ENCODE measurements at regions of chr11 and their contacts with region 1.

Region 1: GRCh38 chr11:43895601-43896000 is 15.0 kb downstream of the ALKBH3 start:
- DNase-seq: no peak
- H3K4me3 ChIP-seq: no peak overlapping the region
- H3K27ac ChIP-seq: no peak overlapping the region
- H3K4me1 ChIP-seq: peaks cover 0 to 18% of the 10 kb centered on the region in 2 experiments; a peak in 2 of 4 replicates
- H3K27me3 ChIP-seq: no peaks in the 10 kb centered on the region
- CTCF ChIP-seq: no peak
- EP300 ChIP-seq: no peak
- RAD21 ChIP-seq: no peak

Region 2: GRCh38 chr11:43810929-43811596 is 84.5 kb before region 1 on chr11:
- CTCF ChIA-PET with region 1: no interaction called
- POLR2A ChIA-PET with region 1: no interaction called
- DNase-seq: no peak
- H3K4me3 ChIP-seq: no peak overlapping the region
- H3K27ac ChIP-seq: no peak overlapping the region
- H3K4me1 ChIP-seq: peaks cover 3 to 8% of the 10 kb centered on the region in 2 experiments; a peak in 3 of 4 replicates
- H3K27me3 ChIP-seq: no peaks in the 10 kb centered on the region
- CTCF ChIP-seq: peak; percentile 65
- EP300 ChIP-seq: no peak
- RAD21 ChIP-seq: peak; percentile 80

Region 3: GRCh38 chr11:43920598-43921419 is 25.2 kb after region 1 on chr11:
- CTCF ChIA-PET with region 1: interaction called, 24 read pairs
- POLR2A ChIA-PET with region 1: interaction called, 6 read pairs
- DNase-seq: no peak
- H3K4me3 ChIP-seq: no peak overlapping the region
- H3K27ac ChIP-seq: peak overlapping the region; percentile 65 to 100
- H3K4me1 ChIP-seq: peaks cover 4 to 84% of the 10 kb centered on the region in 2 experiments; a peak in 3 of 4 replicates
- H3K27me3 ChIP-seq: no peaks in the 10 kb centered on the region
- CTCF ChIP-seq: no peak
- EP300 ChIP-seq: no peak
- RAD21 ChIP-seq: no peak

Region 4: DNA sequence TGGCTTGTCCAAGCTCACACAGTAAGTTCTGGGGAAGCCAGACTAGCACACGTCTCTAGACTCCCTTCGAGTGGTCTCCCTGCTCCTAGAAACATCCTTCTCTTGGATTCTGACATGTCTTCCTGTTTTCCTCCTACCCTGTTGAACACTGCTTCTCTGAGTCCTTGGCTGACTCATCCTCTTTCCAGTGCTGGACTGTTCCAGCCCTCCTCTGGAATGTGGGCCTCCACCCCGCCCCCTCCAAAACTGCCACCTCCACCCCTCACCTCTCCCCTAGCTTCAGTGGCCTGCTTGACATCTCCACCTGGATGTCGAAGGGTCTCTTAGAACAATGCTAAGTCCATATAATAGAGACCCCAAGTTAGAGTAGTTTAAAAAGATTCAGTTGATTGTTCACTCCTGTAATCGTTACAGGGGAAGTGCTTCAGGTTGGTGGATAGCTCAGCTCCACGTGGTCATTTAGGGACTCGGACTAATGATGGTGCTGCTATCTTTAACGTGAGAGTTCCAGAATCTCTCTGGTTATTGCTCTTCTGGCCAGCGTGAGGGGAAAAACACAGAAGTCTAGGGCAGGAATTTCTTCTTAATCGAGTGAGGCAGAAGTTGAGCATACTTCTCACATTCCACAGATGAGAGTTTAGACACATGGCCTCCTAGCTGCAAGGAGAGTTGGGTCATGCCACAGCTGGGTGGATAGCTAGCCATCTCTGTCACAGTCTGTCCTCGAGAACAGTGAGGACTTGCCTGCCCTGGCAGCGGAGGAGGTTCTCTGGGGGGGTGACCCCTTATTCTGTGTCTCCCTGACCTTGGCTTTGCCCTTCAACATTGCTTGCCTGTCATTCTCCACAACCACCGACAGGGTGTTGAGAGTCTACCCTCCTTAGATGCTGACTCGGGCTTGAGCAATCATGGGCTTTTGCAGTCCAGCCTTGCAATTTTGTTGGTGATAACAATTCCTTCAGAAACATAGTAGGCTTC is 42.1 kb after region 1 on chr11:
- CTCF ChIA-PET with region 1: interaction called, 216 read pairs
- POLR2A ChIA-PET with region 1: interaction called, 80 read pairs
- DNase-seq: no peak
- H3K4me3 ChIP-seq: no peak overlapping the region
- H3K27ac ChIP-seq: 0 out of 4 replicates have a peak overlapping the region, but pooled peaks of 1 of the 2 experiments have one; percentile 35
- H3K4me1 ChIP-seq: peaks cover 7 to 50% of the 10 kb centered on the region in 2 experiments; a peak in 3 of 4 replicates
- H3K27me3 ChIP-seq: peaks cover 10% of the 10 kb centered on the region
- CTCF ChIP-seq: no peak
- EP300 ChIP-seq: no peak
- RAD21 ChIP-seq: no peak

Region 5: DNA sequence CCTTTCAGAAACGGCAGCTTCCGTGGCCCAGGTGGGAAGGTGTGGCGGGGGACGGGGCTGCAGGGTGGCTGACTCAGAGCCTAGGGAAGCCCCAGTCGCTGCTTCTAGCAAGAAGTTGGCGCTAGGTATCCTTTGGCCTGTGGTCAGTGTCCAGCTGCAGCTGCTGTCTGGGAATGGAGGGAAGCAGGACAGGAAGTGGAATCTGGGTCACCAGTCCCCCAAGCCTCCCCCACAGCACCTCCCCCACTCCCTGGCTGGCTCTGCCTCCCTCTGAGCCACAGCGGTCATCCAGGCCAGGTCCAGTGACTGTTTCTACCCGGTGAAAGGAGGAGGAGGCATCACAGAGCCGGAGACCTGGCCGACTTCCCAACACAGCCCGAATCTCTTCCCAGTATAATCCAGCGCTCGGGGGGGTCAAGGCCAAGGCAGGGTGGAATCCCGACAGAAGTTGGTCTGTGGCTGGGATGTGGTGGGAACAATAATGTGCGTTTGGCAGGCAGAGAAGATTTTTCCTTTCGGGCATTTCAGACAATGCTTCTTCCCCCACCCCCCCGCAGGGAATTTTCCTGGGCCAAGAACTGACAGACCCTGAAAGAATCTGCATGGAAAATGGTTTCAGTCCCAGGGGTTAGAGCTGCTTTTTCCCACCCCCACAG is 91.9 kb after region 1 on chr11:
- CTCF ChIA-PET with region 1: interaction called, 16 read pairs
- POLR2A ChIA-PET with region 1: no interaction called
- DNase-seq: peak; percentile 88
- H3K4me3 ChIP-seq: peak overlapping the region in 1 of 2 experiments; percentile 15; a peak in 1 of 4 replicates
- H3K27ac ChIP-seq: peak overlapping the region; percentile 79 to 96
- H3K4me1 ChIP-seq: peaks cover 12 to 59% of the 10 kb centered on the region in 2 experiments; a peak in 3 of 4 replicates
- H3K27me3 ChIP-seq: peaks cover 8% of the 10 kb centered on the region; the same call in 1 of the 2 replicates
- CTCF ChIP-seq: no peak
- EP300 ChIP-seq: peak; percentile 45 to 80; a peak in 3 of 4 replicates
- RAD21 ChIP-seq: peak; percentile 41

Region 6: DNA sequence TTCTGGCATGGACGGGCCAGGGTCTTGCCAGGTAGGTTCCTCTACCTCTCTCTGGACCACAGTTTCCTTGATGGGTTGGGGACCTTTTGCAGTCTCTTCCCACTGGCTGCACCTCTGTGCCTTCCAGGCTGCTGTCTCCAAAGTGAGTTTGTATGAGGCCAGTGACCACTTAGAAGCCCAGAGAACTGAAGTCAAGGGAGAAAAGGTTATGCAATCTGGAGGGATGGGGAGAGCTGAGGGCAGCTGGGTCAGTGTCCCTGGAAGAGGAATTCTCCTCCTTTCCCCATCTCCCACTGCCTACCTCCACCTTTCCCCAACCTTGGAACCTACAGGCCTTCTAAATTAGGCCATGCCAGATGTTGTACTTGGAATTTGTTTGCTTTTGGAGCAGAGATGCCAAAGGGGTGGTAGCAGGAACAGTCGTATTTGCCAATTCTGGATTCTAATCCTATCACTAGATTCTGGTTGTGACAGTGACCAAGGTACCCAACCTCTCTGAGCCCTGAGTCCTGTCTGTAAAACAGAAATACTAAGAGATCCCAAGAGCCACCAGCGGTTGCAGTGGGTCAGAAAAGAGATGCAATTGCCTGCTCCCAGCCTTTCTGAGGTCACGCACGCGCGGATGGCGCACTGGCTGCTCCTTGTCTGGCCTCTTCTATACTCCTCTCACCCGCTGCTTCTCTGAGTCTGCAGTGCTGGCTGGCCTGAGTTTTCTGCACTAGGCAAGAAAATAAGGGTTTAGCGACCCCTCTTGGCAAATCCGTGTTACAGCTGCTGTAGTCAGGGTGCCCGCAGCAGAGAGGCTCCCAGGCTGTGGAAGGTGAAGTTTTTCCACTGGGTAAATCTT is 141.4 kb after region 1 on chr11:
- CTCF ChIA-PET with region 1: interaction called, 150 read pairs
- POLR2A ChIA-PET with region 1: interaction called, 3 read pairs
- DNase-seq: peak; percentile 80
- H3K4me3 ChIP-seq: peak overlapping the region in 1 of 2 experiments; percentile 35; a peak in 1 of 4 replicates
- H3K27ac ChIP-seq: peak overlapping the region in 1 of 2 experiments; percentile 55; a peak in 2 of 4 replicates
- H3K4me1 ChIP-seq: peaks cover 0 to 6% of the 10 kb centered on the region in 2 experiments; a peak in 1 of 4 replicates
- H3K27me3 ChIP-seq: no peaks in the 10 kb centered on the region; the same call in 1 of the 2 replicates
- CTCF ChIP-seq: peak; percentile 90
- EP300 ChIP-seq: peak in 1 of 2 experiments; percentile 52; a peak in 1 of 4 replicates
- RAD21 ChIP-seq: peak; percentile 99

Measured in SK-N-SH (cell line).